ENCODE measurements at regions of chr16 and their contacts with region 1.

Region 1: DNA sequence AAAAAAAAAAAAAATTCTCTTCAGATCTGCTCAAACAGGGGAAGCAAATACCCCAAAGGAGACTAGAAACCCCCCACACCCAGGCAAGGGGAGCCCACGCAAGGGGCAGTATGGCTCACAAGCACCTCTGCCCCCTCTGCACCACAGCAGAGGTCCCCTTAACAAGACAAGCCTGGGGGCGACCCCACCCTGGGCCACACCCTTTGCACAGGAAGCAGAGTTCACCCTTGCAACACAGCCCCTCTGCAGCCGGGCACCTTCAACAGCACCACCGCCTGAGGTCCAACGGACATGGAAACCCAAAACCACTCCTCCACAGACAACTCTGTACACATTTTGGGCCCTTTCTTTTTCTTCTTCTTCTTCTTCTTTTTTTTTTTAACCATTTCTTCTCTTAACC is 12.8 kb downstream of the AXIN1 start:
- DNase-seq: no peak
- ATAC-seq: no peak
- H3K4me3 ChIP-seq: no peak overlapping the region
- H3K27ac ChIP-seq: no peak overlapping the region
- H3K4me1 ChIP-seq: peaks cover 11% of the 10 kb centered on the region
- H3K27me3 ChIP-seq: no peaks in the 10 kb centered on the region
- CTCF ChIP-seq: no peak

Region 2: DNA sequence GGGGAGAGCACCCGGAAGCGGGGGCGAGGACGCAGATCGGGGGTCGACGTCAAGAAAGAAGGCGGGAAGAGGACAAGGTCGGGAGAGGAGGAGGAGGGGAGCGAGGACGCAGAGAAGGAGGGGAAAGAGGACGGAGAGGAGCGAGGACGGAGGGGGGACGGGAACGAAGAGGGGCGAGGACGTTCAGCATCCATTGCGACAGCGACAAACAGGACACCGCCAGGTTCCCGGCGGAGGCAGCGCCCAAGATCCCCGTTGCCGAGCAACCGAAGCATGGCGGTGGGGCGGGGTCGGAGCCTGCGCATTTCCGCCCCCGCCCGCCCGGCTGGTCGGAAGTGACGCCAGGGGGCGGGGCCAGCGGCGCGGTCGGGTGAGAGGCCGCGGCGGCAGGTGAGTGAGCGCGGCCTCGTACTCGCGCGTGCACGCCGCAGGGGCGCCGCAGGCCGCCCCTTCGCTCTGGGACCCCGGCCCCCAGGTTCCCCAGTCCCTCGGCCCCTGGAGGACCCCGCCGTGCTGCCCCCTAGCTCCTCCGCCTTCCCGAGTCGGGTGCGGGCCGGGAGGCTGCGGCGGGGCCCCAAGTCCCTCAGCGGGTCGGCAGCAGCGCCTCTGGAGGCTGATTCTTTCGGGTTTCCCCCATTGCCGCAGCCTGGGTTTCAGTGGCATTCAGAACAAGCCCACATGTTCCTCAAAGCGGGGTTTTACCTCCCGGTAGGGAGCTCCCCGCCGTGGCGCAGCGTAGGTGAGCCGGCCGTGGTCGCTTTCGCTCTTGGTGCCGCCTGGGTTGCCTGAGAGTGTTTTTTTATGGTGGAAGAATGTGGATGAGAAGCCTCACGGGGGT is 105.0 kb before region 1 on chr16 and contains the start of gene FAM234A:
- intact Hi-C with region 1: loop called in 1 of 2 experiments (anchors 5 kb)
- DNase-seq: peak; percentile 95 to 97
- ATAC-seq: peak; percentile 94 to 96 (median 95)
- H3K4me3 ChIP-seq: peak within 1 kb of the TSS; percentile 98
- H3K27ac ChIP-seq: peak within 1 kb of the TSS; percentile 100
- H3K4me1 ChIP-seq: peaks cover 11% of the 10 kb centered on the region
- H3K27me3 ChIP-seq: no peaks in the 10 kb centered on the region
- CTCF ChIP-seq: peak; percentile 36
- total RNA-seq, gene FAM234A: 108 to 154 (median 120) TPM

Region 3: DNA sequence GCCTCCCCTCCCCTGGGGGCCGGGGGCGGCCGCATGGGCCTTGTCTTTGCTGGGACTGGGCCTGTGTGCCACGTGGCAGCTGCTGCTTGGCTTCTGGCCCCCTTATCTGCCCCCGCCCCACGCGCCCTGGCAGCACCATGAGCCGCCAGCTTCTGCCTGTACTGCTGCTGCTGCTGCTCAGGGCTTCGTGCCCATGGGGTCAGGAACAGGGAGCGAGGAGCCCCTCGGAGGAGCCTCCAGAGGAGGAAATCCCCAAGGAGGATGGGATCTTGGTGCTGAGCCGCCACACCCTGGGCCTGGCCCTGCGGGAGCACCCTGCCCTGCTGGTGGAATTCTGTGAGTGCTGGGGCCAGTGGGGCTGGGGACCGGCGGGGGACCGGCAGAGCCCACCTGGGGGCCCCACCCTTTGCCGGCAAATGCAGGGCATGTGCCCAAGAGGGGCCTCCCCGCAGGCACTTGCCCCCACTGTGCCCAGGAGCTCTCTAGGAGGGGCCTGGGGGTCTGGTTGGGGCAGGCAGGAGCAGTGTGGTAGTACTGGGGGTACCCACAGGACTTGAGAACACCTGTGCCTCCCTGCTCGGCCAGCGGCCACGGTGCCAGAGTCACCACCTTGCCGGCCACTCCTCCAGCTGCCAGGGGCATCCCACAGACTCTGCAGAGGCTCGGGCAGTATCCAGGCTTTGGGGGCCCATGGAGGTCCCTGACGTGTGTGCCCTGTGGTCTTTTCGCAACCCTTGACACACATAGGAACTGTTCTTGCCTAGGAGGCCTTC is 56.5 kb before region 1 on chr16 and contains the start of gene PDIA2:
- intact Hi-C with region 1: loop called in 1 of 2 experiments (anchors 2 kb)
- DNase-seq: peak in 1 of 2 donors; percentile 43
- ATAC-seq: no peak
- H3K4me3 ChIP-seq: no peak within 1 kb of the TSS
- H3K27ac ChIP-seq: no peak within 1 kb of the TSS
- H3K4me1 ChIP-seq: peaks cover 6% of the 10 kb centered on the region
- H3K27me3 ChIP-seq: peaks cover 0 to 27% (median 12%) of the 10 kb centered on the region in 3 donors
- CTCF ChIP-seq: no peak
- total RNA-seq, gene PDIA2: 0.90 TPM in 1 of 4 donors, not detected in the others

Region 4: GRCh38 chr16:352547-353403 is 13.1 kb after region 1 on chr16 and contains the start of gene AXIN1:
- intact Hi-C with region 1: no loop called
- DNase-seq: peak; percentile 99 to 100
- ATAC-seq: peak; percentile 92 to 95 (median 93)
- H3K4me3 ChIP-seq: peak within 1 kb of the TSS; percentile 79
- H3K27ac ChIP-seq: peak within 1 kb of the TSS; percentile 76
- H3K4me1 ChIP-seq: peaks cover 11% of the 10 kb centered on the region
- H3K27me3 ChIP-seq: no peaks in the 10 kb centered on the region
- CTCF ChIP-seq: peak; percentile 47
- total RNA-seq, gene AXIN1: 12.1 to 23.2 (median 22.8) TPM